ENCODE measurements at regions of chr11 and their contacts with region 1.

Region 1: GRCh38 chr11:94543695-94544645 is at the start of gene FUT4:
- DNase-seq: peak; percentile 96 to 98
- H3K4me3 ChIP-seq: peak within 1 kb of the TSS; percentile 71
- H3K4me3 Mint-ChIP-seq: peak within 1 kb of the TSS; percentile 86
- H3K27ac Mint-ChIP-seq: peak within 1 kb of the TSS; percentile 90
- H3K4me1 ChIP-seq: peaks cover 29% of the 10 kb centered on the region
- H3K4me1 Mint-ChIP-seq: peaks cover 34% of the 10 kb centered on the region
- H3K27me3 ChIP-seq: no peaks in the 10 kb centered on the region
- H3K27me3 Mint-ChIP-seq: no peaks in the 10 kb centered on the region
- CTCF ChIP-seq: no peak
- total RNA-seq, gene FUT4: 24.5 and 25.0 TPM in 2 replicates

Region 2: DNA sequence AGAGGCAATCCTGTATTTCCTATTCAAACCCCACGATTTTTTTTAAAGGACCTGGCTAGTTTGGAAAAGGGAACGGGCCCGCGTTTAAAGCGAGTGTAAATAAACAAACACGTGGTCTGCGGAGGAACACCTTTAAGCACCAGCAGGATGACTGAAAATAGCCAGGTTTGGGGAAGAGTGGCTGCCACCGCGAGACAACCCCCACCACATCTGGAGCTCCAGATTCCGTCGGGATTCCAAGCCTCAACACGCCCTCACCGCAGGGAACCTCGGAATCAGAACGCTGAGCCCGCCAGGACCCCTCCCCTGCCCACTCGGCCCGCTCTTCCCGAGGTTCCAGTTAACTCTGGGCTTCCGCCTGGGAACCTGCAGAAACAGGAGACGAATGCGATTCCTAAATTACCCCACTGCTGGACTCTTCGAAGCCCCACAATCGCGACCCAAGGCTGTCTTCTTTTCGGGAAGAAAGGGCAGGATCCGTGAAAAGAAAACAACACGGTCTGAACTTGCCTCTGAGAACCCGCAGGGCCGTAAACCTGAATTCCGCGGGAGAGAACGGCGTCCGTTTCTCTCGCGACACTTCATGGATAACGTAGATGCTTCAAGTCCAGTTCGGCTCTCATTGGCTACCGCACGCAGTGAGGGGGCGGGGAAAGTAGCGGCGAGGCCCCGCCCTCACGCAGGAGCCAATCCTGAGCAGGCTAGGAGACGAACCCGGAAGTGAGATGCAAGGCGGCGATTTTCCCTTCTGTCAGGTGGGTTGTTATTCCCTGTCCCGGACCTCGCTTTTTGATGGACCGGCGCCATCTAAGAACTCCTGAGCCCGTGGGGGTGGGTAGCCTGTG is 50.5 kb before region 1 on chr11 and contains the starts of genes ANKRD49 and MRE11:
- CTCF ChIA-PET with region 1: no interaction called
- POLR2A ChIA-PET with region 1: interaction called, 3 read pairs
- intact Hi-C with region 1: loop called (anchors 1 kb)
- DNase-seq: peak; percentile 100
- H3K4me3 ChIP-seq: peak within 1 kb of the TSS; percentile 59
- H3K4me3 Mint-ChIP-seq: peak within 1 kb of the TSS; percentile 97
- H3K27ac Mint-ChIP-seq: peak within 1 kb of the TSS; percentile 98
- H3K4me1 ChIP-seq: peaks cover 20% of the 10 kb centered on the region
- H3K4me1 Mint-ChIP-seq: peaks cover 14% of the 10 kb centered on the region
- H3K27me3 ChIP-seq: no peaks in the 10 kb centered on the region
- H3K27me3 Mint-ChIP-seq: no peaks in the 10 kb centered on the region
- CTCF ChIP-seq: no peak
- total RNA-seq, gene ANKRD49: 27.5 and 29.2 TPM in 2 replicates
- total RNA-seq, gene MRE11: 64.8 and 80.0 TPM in 2 replicates

Region 3: GRCh38 chr11:94519478-94520084 is 24.4 kb before region 1 on chr11:
- CTCF ChIA-PET with region 1: interaction called, 6 read pairs
- POLR2A ChIA-PET with region 1: no interaction called
- intact Hi-C with region 1: loop called (anchors 1 kb)
- DNase-seq: peak in 1 of 2 experiments; percentile 51
- H3K4me3 ChIP-seq: no peak overlapping the region
- H3K4me3 Mint-ChIP-seq: no peak overlapping the region
- H3K27ac Mint-ChIP-seq: no peak overlapping the region
- H3K4me1 ChIP-seq: peaks cover 11% of the 10 kb centered on the region
- H3K4me1 Mint-ChIP-seq: no peaks in the 10 kb centered on the region
- H3K27me3 ChIP-seq: no peaks in the 10 kb centered on the region
- H3K27me3 Mint-ChIP-seq: peaks cover 5% of the 10 kb centered on the region
- CTCF ChIP-seq: peak; percentile 78 to 86

Region 4: DNA sequence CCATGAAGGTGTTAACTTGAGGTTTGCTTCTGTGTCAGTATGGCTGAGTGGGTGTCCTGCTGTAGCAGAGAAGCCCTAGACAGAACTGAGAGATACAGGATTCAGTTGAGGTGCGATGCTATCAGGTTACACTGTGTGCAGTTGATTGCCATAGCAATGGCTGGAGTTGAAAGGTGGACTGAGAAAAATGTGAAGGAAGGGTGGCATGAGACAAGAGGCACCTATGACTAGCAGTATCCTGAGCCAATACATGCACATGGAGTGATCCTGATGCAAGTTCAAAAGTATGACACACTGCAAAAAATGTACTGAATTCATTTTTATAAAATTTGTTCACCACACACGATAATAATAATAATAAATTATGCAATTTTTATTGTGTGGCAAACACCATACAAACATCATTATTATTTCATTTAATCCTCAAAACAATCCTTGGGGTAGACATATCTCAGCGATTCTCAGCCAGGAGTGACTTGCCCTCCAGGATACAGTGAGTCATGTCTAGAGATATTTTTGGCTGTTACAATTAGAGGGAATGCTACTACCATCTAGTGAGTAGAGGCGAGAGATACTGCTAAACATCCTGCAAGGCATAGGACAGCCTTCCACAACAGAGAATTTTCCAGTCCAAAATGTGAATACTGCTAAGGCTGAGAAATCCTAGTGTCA is 19.3 kb after region 1 on chr11:
- CTCF ChIA-PET with region 1: no interaction called
- POLR2A ChIA-PET with region 1: no interaction called
- intact Hi-C with region 1: loop called (anchors 2 kb)
- DNase-seq: no peak
- H3K4me3 ChIP-seq: no peak overlapping the region
- H3K4me3 Mint-ChIP-seq: no peak overlapping the region
- H3K27ac Mint-ChIP-seq: no peak overlapping the region
- H3K4me1 ChIP-seq: peaks cover 16% of the 10 kb centered on the region
- H3K4me1 Mint-ChIP-seq: peaks cover 18% of the 10 kb centered on the region
- H3K27me3 ChIP-seq: no peaks in the 10 kb centered on the region
- H3K27me3 Mint-ChIP-seq: no peaks in the 10 kb centered on the region
- CTCF ChIP-seq: peak in 1 of 2 experiments; percentile 14

Region 5: DNA sequence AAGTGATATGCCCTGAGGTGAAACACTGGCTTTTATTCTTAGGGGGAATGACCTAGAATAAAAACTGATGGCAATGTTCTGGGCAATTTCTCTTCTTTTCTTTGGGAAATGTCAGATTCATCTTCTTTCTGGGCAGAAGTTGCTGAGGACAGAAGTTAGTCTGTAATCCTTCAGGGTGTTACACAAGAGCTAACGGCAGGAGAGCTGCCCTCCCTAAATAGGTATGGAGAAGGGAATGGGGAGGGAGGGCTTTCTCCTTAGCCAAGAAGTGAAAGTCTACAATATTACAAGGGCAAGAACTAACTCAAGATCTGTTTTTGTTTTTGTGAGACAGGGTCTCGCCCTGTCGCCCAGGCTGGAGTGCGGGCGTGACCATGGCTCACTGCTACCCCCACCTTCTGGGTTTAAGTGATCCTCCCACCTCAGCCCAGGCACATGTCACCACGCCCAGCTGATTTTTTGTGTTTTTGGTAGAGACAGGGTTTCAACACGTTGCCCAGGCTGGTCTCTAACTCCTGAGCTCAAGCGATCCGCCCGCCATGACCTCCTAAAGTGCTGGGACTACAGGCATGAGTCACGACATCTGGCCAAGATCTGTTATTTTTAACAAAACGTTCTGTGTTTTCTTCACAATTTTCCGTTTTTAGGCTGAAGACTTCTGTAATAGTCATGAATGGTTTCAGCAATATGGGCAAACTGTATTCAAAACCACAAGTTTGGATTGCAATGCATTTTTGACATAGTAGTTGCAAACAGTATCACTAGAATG is 30.4 kb after region 1 on chr11:
- CTCF ChIA-PET with region 1: no interaction called
- POLR2A ChIA-PET with region 1: no interaction called
- intact Hi-C with region 1: no loop called
- DNase-seq: no peak
- H3K4me3 ChIP-seq: no peak overlapping the region
- H3K4me3 Mint-ChIP-seq: no peak overlapping the region
- H3K27ac Mint-ChIP-seq: no peak overlapping the region
- H3K4me1 ChIP-seq: peaks cover 12% of the 10 kb centered on the region; the same call in 1 of the 2 replicates
- H3K4me1 Mint-ChIP-seq: no peaks in the 10 kb centered on the region
- H3K27me3 ChIP-seq: no peaks in the 10 kb centered on the region
- H3K27me3 Mint-ChIP-seq: no peaks in the 10 kb centered on the region
- CTCF ChIP-seq: no peak

Region 6: GRCh38 chr11:94588371-94588952 is 44.5 kb after region 1 on chr11:
- CTCF ChIA-PET with region 1: interaction called, 6 read pairs
- POLR2A ChIA-PET with region 1: interaction called, 10 read pairs
- intact Hi-C with region 1: loop called (anchors 1 kb)
- DNase-seq: peak; percentile 87 to 93
- H3K4me3 ChIP-seq: no peak overlapping the region
- H3K4me3 Mint-ChIP-seq: peak overlapping the region; percentile 57
- H3K27ac Mint-ChIP-seq: peak overlapping the region; percentile 34
- H3K4me1 ChIP-seq: peaks cover 61% of the 10 kb centered on the region
- H3K4me1 Mint-ChIP-seq: peaks cover 60% of the 10 kb centered on the region
- H3K27me3 ChIP-seq: no peaks in the 10 kb centered on the region
- H3K27me3 Mint-ChIP-seq: no peaks in the 10 kb centered on the region
- CTCF ChIP-seq: no peak

Region 7: DNA sequence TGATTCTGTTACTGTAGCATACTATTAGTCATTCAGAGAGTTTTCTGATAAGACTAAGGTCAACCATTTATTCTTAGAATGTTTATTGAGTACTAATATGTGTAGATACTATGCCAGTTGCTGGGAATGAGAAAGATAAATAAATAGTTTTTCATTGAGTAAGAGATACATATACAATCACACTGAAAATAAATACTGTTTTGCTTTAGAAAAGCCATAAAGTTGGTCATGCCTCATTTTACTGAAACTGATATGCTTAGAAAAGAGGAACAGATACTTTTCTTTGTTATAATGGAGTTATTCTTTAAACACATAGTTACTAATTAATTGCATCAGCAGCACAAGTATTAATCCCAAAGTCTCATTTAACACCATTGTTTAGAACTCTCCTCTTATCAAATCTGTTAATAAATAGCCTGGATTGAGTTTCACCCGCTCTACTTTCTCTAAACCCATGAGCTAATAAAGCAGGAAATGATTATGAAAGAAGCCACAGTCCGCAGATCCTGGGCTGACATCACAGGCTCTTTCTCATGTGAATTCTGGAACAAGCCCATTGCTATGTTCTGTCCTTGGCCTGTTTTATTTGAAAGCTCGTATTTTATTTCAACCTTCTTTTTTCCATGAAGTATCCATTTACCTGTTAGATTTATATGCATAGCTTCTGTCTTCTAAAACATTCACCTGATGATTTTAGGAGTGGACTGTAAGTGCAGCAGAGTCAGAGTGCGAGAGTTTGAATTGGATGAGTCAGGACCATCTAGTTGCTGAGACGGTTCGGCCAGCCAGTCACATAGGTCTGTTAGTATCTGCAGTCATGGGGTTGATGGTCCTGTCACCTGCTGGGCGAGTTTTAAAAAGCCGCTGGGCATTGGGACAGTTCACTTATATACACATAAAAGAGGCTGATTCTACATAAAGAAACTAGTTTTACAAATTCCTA is 58.7 kb after region 1 on chr11:
- CTCF ChIA-PET with region 1: no interaction called
- POLR2A ChIA-PET with region 1: no interaction called
- intact Hi-C with region 1: loop called (anchors 1 kb)
- DNase-seq: peak; percentile 58 to 79
- H3K4me3 ChIP-seq: no peak overlapping the region
- H3K4me3 Mint-ChIP-seq: peak overlapping the region; percentile 63
- H3K27ac Mint-ChIP-seq: peak overlapping the region; percentile 68
- H3K4me1 ChIP-seq: peaks cover 30% of the 10 kb centered on the region
- H3K4me1 Mint-ChIP-seq: peaks cover 20% of the 10 kb centered on the region
- H3K27me3 ChIP-seq: no peaks in the 10 kb centered on the region
- H3K27me3 Mint-ChIP-seq: no peaks in the 10 kb centered on the region
- CTCF ChIP-seq: peak in 1 of 2 experiments; percentile 39

Measured in Caco-2 (cell line).